AG04449 (cell line): ENCODE measurements at regions of chr3 and their contacts with region 1.

Region 1: DNA sequence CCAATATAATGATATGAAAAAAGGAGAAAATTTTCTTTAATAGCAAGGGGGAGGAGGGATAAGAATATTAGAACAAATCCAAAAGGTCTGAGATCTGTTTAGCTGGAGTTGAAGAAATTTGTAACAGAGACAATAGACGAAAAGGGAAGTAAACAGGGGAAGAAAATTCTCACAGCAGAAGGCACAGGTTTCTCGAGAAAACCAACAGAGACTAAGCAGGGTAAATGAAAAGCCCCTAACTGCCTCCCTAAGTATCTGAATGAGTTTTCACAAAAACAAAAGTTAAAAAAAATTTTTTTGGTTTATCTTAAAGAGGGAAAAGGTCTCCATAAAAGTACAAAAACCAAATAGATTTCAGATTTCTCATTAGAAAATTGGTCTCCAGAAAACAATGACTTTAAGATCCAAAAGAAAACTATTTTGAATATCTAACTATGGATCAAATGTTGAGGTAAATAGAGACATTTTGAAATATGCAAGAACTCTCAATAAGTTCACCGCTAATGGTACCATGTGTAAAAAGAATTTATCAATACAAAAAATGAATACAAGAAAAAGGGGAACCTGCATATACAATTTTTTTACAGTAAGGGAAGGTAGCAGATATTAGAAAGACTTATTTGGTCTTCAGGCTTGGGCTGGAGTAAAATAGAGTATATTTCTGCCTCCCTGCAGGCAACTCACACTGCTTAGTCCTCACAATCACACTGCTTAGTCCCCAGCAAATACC is 23.9 kb upstream of the NEK10 start:
- DNase-seq: no peak
- H3K4me3 ChIP-seq: no peak overlapping the region
- CTCF ChIP-seq: no peak

Region 2: DNA sequence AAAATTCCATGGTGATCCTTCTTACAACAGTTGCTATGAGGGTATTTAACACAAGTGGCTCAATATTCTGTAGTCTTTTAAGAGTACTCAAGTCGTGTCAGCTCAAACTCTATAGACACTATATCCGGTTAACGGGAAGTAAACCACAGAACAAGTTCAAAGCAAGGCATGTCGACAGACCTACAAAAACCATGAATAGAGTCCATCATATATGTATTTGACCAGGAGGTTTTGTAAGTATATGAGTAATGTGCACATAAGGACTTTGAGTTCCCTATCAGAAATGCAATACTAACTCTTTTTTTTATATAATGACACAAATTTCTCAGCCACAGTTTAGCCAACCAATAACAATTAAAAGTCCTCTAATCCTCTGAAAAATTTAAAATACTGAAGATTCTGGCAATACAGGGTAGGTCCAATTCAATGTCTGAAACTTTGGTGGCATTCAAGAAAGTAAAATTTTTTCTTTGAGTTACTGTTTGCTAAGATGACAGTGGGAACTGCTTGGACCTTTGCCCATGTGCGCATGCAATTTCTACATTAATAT is 117.6 kb before region 1 on chr3:
- CTCF ChIA-PET with region 1: no interaction called
- POLR2A ChIA-PET with region 1: no interaction called
- DNase-seq: no peak
- H3K4me3 ChIP-seq: no peak overlapping the region
- CTCF ChIP-seq: no peak

Region 3: GRCh38 chr3:27415202-27415601 is 22.1 kb after region 1 on chr3:
- CTCF ChIA-PET with region 1: interaction called, 12 read pairs
- POLR2A ChIA-PET with region 1: no interaction called
- DNase-seq: no peak
- H3K4me3 ChIP-seq: no peak overlapping the region
- CTCF ChIP-seq: no peak

Region 4: DNA sequence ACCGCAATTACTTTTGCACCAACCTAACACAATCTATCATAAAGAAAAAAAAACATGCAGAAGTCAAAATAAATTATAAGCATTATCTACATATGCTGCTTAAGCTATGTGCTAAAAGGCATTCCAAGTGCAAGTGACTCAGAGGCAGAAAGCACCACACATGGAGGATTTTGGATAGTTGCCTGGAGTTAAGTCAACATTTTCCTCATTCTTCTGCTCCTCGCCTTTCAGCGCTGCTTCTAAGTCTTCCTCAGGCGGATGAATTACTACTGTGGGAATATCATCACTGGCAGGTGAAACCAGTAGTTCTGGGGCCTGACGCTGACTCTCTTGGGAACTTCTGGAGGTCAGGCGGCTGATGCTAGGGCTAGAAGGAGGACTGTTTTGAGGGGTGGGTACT is 38.0 kb after region 1 on chr3:
- CTCF ChIA-PET with region 1: no interaction called
- POLR2A ChIA-PET with region 1: no interaction called
- DNase-seq: peak; percentile 99
- H3K4me3 ChIP-seq: no peak overlapping the region
- CTCF ChIP-seq: no peak